Transverse colon (tissue), 4 donors: ENCODE measurements at regions of chr14 and their contacts with region 1.

Region 1: GRCh38 chr14:31257244-31257553 is 49.6 kb upstream of the HECTD1 start:
- DNase-seq: no peak
- H3K4me3 ChIP-seq: no peak overlapping the region
- H3K27ac ChIP-seq: no peak overlapping the region
- H3K4me1 ChIP-seq: peaks cover 0 to 14% (median 10%) of the 10 kb centered on the region in 4 donors
- H3K27me3 ChIP-seq: no peaks in the 10 kb centered on the region
- CTCF ChIP-seq: no peak
- EP300 ChIP-seq: no peak
- POLR2A ChIP-seq: no peak

Region 2: GRCh38 chr14:31241450-31242114 is 15.6 kb before region 1 on chr14:
- in situ Hi-C with region 1: no loop called
- intact Hi-C with region 1: loop called (anchors 1 kb)
- DNase-seq: no peak
- H3K4me3 ChIP-seq: no peak overlapping the region
- H3K27ac ChIP-seq: peak overlapping the region; percentile 20 to 47 (median 37)
- H3K4me1 ChIP-seq: peaks cover 8 to 31% (median 12%) of the 10 kb centered on the region in 4 donors
- H3K27me3 ChIP-seq: no peaks in the 10 kb centered on the region
- CTCF ChIP-seq: no peak
- EP300 ChIP-seq: no peak
- POLR2A ChIP-seq: no peak

Region 3: GRCh38 chr14:31300296-31300695 is 43.1 kb after region 1 on chr14:
- in situ Hi-C with region 1: no loop called
- intact Hi-C with region 1: no loop called
- DNase-seq: no peak
- H3K4me3 ChIP-seq: no peak overlapping the region
- H3K27ac ChIP-seq: no peak overlapping the region
- H3K4me1 ChIP-seq: no peaks in the 10 kb centered on the region
- H3K27me3 ChIP-seq: no peaks in the 10 kb centered on the region
- CTCF ChIP-seq: no peak
- EP300 ChIP-seq: no peak
- POLR2A ChIP-seq: no peak

Region 4: GRCh38 chr14:31340297-31341063 is 83.3 kb after region 1 on chr14:
- in situ Hi-C with region 1: no loop called
- intact Hi-C with region 1: no loop called
- DNase-seq: no peak
- H3K4me3 ChIP-seq: no peak overlapping the region
- H3K27ac ChIP-seq: no peak overlapping the region
- H3K4me1 ChIP-seq: peaks cover 0 to 20% (median 9%) of the 10 kb centered on the region in 4 donors
- H3K27me3 ChIP-seq: no peaks in the 10 kb centered on the region
- CTCF ChIP-seq: no peak
- EP300 ChIP-seq: no peak
- POLR2A ChIP-seq: no peak